HCT116 (cell line): ENCODE measurements at regions of chr2 and their contacts with region 1.

Region 1: GRCh38 chr2:95728878-95729596 is 137.2 kb downstream of the TRIM43 start:
- DNase-seq: peak; percentile 86
- ATAC-seq: peak; percentile 98
- H3K4me3 ChIP-seq: no peak overlapping the region
- H3K27ac ChIP-seq: no peak overlapping the region
- H3K4me1 ChIP-seq: peaks cover 0 to 4% of the 10 kb centered on the region in 2 experiments; a peak in 1 of 4 replicates
- H3K27me3 ChIP-seq: no peaks in the 10 kb centered on the region
- CTCF ChIP-seq: peak; percentile 47 to 91 (median 62); a peak in 5 of 6 replicates
- POLR2A ChIP-seq: no peak
- RAD21 ChIP-seq: peak; percentile 95

Region 2: GRCh38 chr2:95345566-95346230 is 383.3 kb before region 1 on chr2:
- CTCF ChIA-PET with region 1: interaction called, 3 read pairs
- POLR2A ChIA-PET with region 1: no interaction called
- RAD21 ChIA-PET with region 1: no interaction called
- intact Hi-C with region 1: loop called (anchors 1 kb)
- DNase-seq: peak; percentile 60
- ATAC-seq: peak; percentile 92
- H3K4me3 ChIP-seq: peak overlapping the region; percentile 48 to 62
- H3K27ac ChIP-seq: peak overlapping the region; percentile 49; the same call in 1 of the 2 replicates
- H3K4me1 ChIP-seq: peaks cover 0 to 26% of the 10 kb centered on the region in 2 experiments; a peak in 3 of 4 replicates
- H3K27me3 ChIP-seq: no peaks in the 10 kb centered on the region
- CTCF ChIP-seq: peak; percentile 63 to 95 (median 79); a peak in 5 of 6 replicates
- POLR2A ChIP-seq: no peak
- RAD21 ChIP-seq: peak; percentile 80

Region 3: GRCh38 chr2:96276787-96277499 is 547.9 kb after region 1 on chr2:
- CTCF ChIA-PET with region 1: no interaction called
- POLR2A ChIA-PET with region 1: no interaction called
- RAD21 ChIA-PET with region 1: no interaction called
- intact Hi-C with region 1: no loop called
- DNase-seq: no peak
- ATAC-seq: no peak
- H3K4me3 ChIP-seq: no peak overlapping the region
- H3K27ac ChIP-seq: no peak overlapping the region
- H3K4me1 ChIP-seq: peaks cover 0 to 5% of the 10 kb centered on the region in 2 experiments; a peak in 1 of 4 replicates
- H3K27me3 ChIP-seq: no peaks in the 10 kb centered on the region
- CTCF ChIP-seq: no peak
- POLR2A ChIP-seq: no peak
- RAD21 ChIP-seq: no peak